ENCODE measurements at regions of chr2 and their contacts with region 1.

Region 1: DNA sequence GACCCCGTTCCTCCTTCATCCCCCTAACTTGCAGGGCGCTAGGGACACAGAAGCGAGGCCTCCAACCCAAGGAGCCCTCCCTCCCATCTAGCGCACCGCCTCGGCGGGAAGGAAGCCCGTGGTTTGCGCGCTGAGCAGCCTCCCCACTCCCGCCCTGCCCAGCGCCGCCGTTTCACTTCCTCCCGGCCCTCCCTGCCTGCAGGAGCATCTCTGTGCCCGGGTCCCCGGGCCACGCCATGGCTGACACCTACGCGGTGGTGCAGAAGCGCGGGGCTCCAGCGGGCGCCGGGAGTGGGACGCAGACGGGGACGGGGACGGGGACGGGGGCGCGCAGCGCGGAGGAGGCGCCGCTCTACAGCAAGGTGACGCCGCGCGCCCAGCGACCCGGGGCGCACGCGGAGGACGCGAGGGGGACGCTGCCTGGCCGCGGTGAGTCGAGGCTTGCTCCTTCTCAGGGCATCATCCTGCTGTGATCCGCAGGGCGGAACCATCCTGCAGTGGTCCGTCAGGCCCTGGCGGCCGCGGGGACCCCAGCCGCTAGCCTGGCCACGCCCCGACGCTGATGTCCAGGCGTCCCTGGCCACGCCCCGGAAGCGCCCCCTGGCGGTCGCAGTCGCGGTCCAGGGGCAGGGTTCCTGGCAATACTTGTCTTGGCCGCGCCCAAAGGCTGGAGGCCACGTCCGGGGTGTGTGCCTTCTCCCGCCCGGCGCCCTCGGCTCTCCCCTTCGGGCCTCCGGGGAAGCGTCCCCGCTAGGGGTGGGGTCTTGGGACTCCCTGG is 16.4 kb downstream of the PTPN18 start:
- DNase-seq: peak; percentile 82
- ATAC-seq: peak; percentile 85
- H3K4me3 Mint-ChIP-seq: peak overlapping the region; percentile 89
- H3K27ac Mint-ChIP-seq: peak overlapping the region; percentile 95
- H3K4me1 Mint-ChIP-seq: peaks cover 64% of the 10 kb centered on the region
- H3K27me3 Mint-ChIP-seq: no peaks in the 10 kb centered on the region
- CTCF ChIP-seq: peak; percentile 80

Region 2: GRCh38 chr2:129780316-129781270 is 591.7 kb before region 1 on chr2:
- CTCF ChIA-PET with region 1: no interaction called
- POLR2A ChIA-PET with region 1: no interaction called
- intact Hi-C with region 1: no loop called
- DNase-seq: no peak
- ATAC-seq: no peak
- H3K4me3 Mint-ChIP-seq: no peak overlapping the region
- H3K27ac Mint-ChIP-seq: no peak overlapping the region
- H3K4me1 Mint-ChIP-seq: no peaks in the 10 kb centered on the region
- H3K27me3 Mint-ChIP-seq: peaks cover 11% of the 10 kb centered on the region
- CTCF ChIP-seq: no peak

Region 3: DNA sequence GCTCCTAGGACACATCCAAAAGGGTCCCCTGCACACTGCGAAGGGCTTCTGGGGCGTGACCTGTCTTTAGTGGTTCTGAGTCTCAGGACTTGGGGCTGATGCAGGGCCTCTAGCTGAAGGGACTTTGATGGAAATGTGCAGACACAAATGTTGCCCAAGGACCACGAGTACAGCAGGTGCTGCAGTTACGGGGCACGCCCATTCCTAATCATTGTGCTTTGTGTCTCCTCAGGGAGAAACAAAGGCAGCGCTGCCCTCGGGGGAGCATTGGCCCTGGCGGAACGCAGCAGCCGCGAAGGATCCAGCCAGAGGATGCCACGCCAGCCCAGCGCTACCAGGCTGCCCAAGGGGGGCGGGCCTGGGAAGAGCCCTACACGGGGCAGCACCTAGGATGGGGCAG is 182.0 kb before region 1 on chr2:
- CTCF ChIA-PET with region 1: no interaction called
- POLR2A ChIA-PET with region 1: no interaction called
- intact Hi-C with region 1: no loop called
- DNase-seq: no peak
- ATAC-seq: no peak
- H3K4me3 Mint-ChIP-seq: no peak overlapping the region
- H3K27ac Mint-ChIP-seq: no peak overlapping the region
- H3K4me1 Mint-ChIP-seq: peaks cover 4% of the 10 kb centered on the region
- H3K27me3 Mint-ChIP-seq: no peaks in the 10 kb centered on the region
- CTCF ChIP-seq: no peak

Region 4: GRCh38 chr2:130288461-130289403 is 83.5 kb before region 1 on chr2:
- CTCF ChIA-PET with region 1: no interaction called
- POLR2A ChIA-PET with region 1: no interaction called
- intact Hi-C with region 1: no loop called
- DNase-seq: no peak
- ATAC-seq: no peak
- H3K4me3 Mint-ChIP-seq: no peak overlapping the region
- H3K27ac Mint-ChIP-seq: no peak overlapping the region
- H3K4me1 Mint-ChIP-seq: no peaks in the 10 kb centered on the region
- H3K27me3 Mint-ChIP-seq: peaks cover 6% of the 10 kb centered on the region
- CTCF ChIP-seq: no peak

Region 5: DNA sequence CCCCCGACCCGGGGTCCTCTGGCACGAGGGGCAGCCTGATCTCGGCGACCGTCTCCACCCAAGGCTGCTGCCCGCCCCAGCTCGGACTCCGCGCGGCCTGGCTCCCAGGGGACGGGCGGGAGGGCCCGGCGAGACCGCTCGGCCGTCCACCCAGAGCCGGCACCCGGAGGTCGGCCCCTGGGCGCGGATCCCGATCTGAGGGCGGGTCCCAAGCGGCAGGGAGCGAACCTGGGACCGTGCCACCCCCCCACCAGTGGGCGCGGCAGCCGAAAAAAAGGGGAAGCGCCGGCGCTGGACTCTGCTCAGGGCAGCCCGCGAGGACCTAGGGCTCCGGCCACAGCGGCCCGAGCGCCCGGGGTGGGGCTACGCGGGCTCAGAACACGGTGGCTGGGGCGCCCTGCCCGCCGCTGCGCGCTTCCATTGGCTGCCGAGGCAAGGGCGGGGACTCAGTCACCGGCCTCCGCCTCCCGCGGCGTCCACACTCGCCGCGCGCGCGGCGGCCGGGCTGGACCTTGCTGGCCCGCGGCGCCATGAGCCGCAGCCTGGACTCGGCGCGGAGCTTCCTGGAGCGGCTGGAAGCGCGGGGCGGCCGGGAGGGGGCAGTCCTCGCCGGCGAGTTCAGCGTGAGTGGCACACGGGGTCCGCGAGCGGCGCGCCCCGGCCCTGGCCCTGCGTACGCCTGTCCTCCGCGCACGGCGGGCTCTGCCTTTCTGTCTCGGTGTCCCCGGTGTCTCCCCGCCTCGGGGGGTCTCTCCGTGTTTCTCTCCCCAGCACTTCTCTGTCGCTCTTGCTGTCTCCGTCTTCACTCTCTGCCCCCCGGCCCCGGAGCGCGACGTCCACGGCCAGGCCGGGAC is 16.4 kb before region 1 on chr2 and contains the start of gene PTPN18:
- CTCF ChIA-PET with region 1: interaction called, 3 read pairs
- POLR2A ChIA-PET with region 1: interaction called, 4 read pairs
- intact Hi-C with region 1: loop called (anchors 1 kb)
- DNase-seq: peak; percentile 59
- ATAC-seq: peak; percentile 96
- H3K4me3 Mint-ChIP-seq: peak within 1 kb of the TSS; percentile 83
- H3K27ac Mint-ChIP-seq: no peak within 1 kb of the TSS
- H3K4me1 Mint-ChIP-seq: peaks cover 31% of the 10 kb centered on the region
- H3K27me3 Mint-ChIP-seq: no peaks in the 10 kb centered on the region
- CTCF ChIP-seq: no peak
- total RNA-seq, gene PTPN18: 77.7 and 79.2 TPM in 2 replicates

Region 6: GRCh38 chr2:130385709-130386108 is 13.5 kb after region 1 on chr2:
- CTCF ChIA-PET with region 1: interaction called, 9 read pairs
- POLR2A ChIA-PET with region 1: interaction called, 37 read pairs
- intact Hi-C with region 1: no loop called
- DNase-seq: no peak
- ATAC-seq: peak; percentile 25
- H3K4me3 Mint-ChIP-seq: peak overlapping the region; percentile 61
- H3K27ac Mint-ChIP-seq: peak overlapping the region; percentile 81
- H3K4me1 Mint-ChIP-seq: peaks cover 81% of the 10 kb centered on the region
- H3K27me3 Mint-ChIP-seq: no peaks in the 10 kb centered on the region
- CTCF ChIP-seq: no peak

Region 7: GRCh38 chr2:130391058-130391871 is 19.0 kb after region 1 on chr2:
- CTCF ChIA-PET with region 1: interaction called, 9 read pairs
- POLR2A ChIA-PET with region 1: interaction called, 37 read pairs
- intact Hi-C with region 1: loop called (anchors 1 kb)
- DNase-seq: peak; percentile 64
- ATAC-seq: peak; percentile 90
- H3K4me3 Mint-ChIP-seq: peak overlapping the region; percentile 91
- H3K27ac Mint-ChIP-seq: peak overlapping the region; percentile 87
- H3K4me1 Mint-ChIP-seq: peaks cover 58% of the 10 kb centered on the region
- H3K27me3 Mint-ChIP-seq: no peaks in the 10 kb centered on the region
- CTCF ChIP-seq: no peak

Measured in activated B cell treated with CpG ODN at 0.5 μM for 24 hours (primary cell).